ENCODE measurements at regions of chr19 and their contacts with region 1.

Region 1: DNA sequence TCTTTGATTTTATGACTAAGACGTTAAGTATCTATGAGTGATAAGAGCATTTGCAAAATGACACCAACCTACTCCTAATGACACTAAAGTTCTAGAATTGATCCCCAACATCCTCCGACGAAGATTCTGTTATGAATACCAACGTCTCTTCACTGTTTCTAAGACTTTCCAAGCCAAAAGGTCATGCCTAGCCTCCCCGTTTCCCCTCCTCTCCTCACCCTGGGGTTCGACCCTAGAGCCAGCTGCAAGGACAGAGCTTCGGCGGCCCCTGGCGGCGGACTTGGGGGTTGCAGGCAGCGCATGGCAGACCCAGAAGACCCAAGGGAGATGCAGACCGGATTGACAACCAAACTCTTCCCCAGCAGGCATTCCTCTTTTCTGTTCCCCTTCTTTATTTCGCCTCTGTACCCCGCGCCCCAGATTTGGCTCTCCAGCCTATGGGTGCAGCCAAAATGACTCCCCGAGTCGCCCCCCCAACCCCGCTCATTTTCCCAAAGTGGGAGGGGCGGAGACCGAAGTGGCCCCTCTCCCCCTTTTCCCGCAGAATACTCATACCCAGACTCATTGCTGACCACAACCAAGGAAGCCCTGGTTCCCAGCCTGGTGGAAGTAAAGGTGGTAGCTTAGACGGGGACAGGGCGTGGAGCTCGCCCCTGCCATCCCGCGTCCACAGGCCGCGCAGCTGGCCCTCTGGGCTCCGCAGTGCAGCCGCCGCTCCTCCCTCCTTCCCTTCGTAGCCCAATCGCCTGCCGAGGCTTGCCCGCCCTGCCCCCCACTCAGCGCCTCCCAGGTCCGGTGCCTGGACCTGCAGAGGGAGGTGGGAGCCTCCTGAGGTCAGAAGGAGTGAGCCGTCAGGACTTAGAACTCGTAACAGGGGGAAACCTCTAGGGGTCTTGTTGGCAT is 4.1 kb upstream of the EML2 start:
- DNase-seq: peak; percentile 71
- H3K4me3 ChIP-seq: peak overlapping the region in 2 of 3 experiments; percentile 33
- H3K27ac ChIP-seq: peak overlapping the region; percentile 1
- H3K4me1 ChIP-seq: peaks cover 38% of the 10 kb centered on the region
- H3K27me3 ChIP-seq: no peaks in the 10 kb centered on the region
- CTCF ChIP-seq: peak; percentile 98

Region 2: GRCh38 chr19:45405435-45406225 is 237.6 kb before region 1 on chr19:
- CTCF ChIA-PET with region 1: no interaction called
- dilution Hi-C with region 1: no loop called
- in situ Hi-C with region 1: no loop called
- intact Hi-C with region 1: loop called (anchors 10 kb)
- DNase-seq: peak; percentile 95
- H3K4me3 ChIP-seq: peak overlapping the region; percentile 90 to 92 (median 91)
- H3K27ac ChIP-seq: peak overlapping the region; percentile 94
- H3K4me1 ChIP-seq: peaks cover 26% of the 10 kb centered on the region
- H3K27me3 ChIP-seq: no peaks in the 10 kb centered on the region
- CTCF ChIP-seq: no peak

Region 3: DNA sequence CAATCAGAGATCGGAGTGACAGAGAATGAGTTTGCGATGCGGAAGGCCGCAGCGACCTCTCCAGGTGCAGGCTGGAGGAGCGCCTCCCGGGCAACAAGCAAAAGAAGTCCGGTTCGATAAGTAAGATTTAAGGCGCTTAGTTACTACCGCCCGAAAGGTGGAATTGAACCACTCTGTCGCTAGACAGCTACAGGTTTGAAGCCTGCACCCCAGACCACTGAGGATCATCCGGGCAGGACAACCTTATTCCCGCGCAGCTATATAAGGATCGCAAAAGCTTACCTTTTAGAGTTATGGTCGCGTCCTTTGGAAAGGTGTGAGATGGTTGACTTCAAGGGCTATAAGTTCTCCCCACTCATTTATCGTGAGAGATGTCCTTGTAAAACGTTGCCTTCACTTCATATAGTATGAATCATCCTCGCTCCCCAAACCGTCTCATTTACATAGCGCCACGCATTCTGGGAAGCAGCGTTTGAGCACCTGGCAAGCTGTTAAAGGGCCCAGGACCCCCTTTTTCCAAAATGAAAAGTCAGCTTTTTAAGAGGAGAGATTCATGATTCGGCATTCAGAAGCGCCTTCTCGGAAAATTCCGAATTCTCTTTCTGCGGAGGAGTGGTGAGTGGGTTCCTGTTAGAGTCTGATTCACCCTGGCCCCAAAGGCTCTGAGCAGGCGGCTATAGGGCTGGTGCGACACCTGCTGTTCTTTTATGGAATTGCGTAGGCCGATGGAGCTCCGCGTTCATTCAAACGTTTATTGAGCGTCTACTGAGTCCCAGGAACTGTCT is 164.6 kb before region 1 on chr19:
- CTCF ChIA-PET with region 1: no interaction called
- dilution Hi-C with region 1: no loop called
- in situ Hi-C with region 1: no loop called
- intact Hi-C with region 1: no loop called
- DNase-seq: peak; percentile 87
- H3K4me3 ChIP-seq: peak overlapping the region; percentile 47 to 58 (median 56)
- H3K27ac ChIP-seq: peak overlapping the region; percentile 99
- H3K4me1 ChIP-seq: peaks cover 5% of the 10 kb centered on the region
- H3K27me3 ChIP-seq: no peaks in the 10 kb centered on the region
- CTCF ChIP-seq: peak; percentile 96 to 98

Region 4: DNA sequence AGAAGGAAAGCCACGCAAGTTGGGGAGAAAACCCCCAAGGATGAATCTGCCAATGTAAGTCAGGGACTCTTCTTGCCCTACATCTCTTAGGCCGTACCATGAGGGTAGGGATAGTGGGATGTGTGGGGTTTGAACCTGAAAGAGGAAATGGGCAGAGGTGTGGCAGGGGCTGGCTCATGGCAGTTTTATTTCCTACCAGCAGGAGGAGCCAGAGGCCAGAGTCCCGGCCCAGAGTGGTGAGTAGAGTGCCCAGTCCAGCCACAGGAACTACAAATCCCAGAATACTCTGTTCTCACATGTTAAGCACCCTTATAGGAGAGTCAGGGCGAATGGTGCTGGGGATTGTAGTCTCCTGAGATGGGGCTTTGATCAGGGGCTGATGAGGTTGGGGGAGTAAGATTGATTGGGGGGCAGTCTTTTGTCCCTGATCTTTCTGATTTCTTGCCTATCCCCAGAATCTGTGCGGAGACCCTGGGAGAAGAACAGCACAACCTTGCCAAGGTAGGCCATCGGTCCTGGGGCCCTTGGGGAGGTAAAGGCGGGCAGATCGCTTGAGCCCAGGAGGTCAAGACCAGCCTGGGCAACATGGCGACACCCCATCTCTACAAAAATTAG is 119.5 kb before region 1 on chr19:
- CTCF ChIA-PET with region 1: no interaction called
- dilution Hi-C with region 1: no loop called
- in situ Hi-C with region 1: no loop called
- intact Hi-C with region 1: loop called (anchors 1 kb)
- DNase-seq: peak; percentile 72
- H3K4me3 ChIP-seq: no peak overlapping the region
- H3K27ac ChIP-seq: no peak overlapping the region
- H3K4me1 ChIP-seq: peaks cover 22% of the 10 kb centered on the region
- H3K27me3 ChIP-seq: no peaks in the 10 kb centered on the region
- CTCF ChIP-seq: peak; percentile 90 to 91

Region 5: GRCh38 chr19:45547976-45548609 is 95.2 kb before region 1 on chr19:
- CTCF ChIA-PET with region 1: no interaction called
- dilution Hi-C with region 1: no loop called
- in situ Hi-C with region 1: no loop called
- intact Hi-C with region 1: no loop called
- DNase-seq: peak; percentile 94
- H3K4me3 ChIP-seq: no peak overlapping the region
- H3K27ac ChIP-seq: peak overlapping the region; percentile 70
- H3K4me1 ChIP-seq: peaks cover 32% of the 10 kb centered on the region
- H3K27me3 ChIP-seq: no peaks in the 10 kb centered on the region
- CTCF ChIP-seq: no peak

Region 6: GRCh38 chr19:45591004-45591637 is 52.2 kb before region 1 on chr19:
- CTCF ChIA-PET with region 1: interaction called, 7 read pairs
- dilution Hi-C with region 1: loop called (anchors 5 kb)
- in situ Hi-C with region 1: no loop called
- intact Hi-C with region 1: loop called (anchors 1 kb)
- DNase-seq: peak; percentile 34
- H3K4me3 ChIP-seq: no peak overlapping the region
- H3K27ac ChIP-seq: no peak overlapping the region
- H3K4me1 ChIP-seq: peaks cover 5% of the 10 kb centered on the region
- H3K27me3 ChIP-seq: no peaks in the 10 kb centered on the region
- CTCF ChIP-seq: peak; percentile 51 to 71

Region 7: DNA sequence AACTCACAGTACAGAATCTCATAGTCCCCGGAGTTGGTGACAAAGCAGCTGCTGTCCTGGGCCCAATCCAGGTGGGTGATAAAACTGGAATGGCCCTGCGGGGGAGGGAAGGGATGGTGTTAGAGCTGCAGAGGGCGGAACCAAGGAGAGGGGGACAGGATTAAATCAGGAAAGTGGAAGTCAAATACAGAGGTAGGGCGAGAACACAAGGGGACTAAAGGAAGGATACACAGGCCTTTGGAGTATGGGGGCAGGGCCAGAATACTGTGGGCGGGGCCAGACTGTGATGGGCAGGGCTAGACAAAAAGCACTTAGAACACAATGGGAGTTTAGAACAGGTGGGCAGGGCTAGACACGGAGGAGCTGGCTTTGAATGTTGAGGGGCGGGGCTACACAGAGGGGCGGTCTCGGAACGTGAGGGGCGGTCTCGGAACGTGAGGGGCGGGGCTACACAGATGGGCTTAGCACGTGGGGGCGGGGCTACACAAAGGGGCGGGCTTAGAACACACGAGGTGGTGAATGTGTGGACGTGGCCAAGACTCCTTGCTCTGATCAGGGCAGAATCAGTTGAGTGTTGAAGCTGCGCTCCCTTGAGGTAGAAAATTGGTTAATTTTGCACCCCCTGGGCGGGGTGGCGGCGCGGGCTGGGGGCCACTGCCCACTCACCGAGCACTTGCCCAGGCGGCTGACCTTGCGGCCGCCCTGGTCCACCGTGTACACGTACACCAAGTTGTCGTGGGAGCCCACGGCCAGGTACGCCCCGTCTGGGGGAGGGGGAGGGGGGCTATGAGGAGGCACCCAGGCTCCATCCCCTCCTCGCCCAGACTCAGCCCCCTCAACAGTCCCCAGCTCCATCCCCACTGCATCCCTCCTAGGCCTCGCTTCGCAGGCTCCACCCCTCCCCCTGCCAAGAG is 27.2 kb before region 1 on chr19:
- CTCF ChIA-PET with region 1: no interaction called
- dilution Hi-C with region 1: no loop called
- in situ Hi-C with region 1: no loop called
- intact Hi-C with region 1: loop called (anchors 2 kb)
- DNase-seq: peak; percentile 71
- H3K4me3 ChIP-seq: no peak overlapping the region
- H3K27ac ChIP-seq: peak overlapping the region; percentile 49
- H3K4me1 ChIP-seq: peaks cover 20% of the 10 kb centered on the region
- H3K27me3 ChIP-seq: no peaks in the 10 kb centered on the region
- CTCF ChIP-seq: no peak

Region 8: DNA sequence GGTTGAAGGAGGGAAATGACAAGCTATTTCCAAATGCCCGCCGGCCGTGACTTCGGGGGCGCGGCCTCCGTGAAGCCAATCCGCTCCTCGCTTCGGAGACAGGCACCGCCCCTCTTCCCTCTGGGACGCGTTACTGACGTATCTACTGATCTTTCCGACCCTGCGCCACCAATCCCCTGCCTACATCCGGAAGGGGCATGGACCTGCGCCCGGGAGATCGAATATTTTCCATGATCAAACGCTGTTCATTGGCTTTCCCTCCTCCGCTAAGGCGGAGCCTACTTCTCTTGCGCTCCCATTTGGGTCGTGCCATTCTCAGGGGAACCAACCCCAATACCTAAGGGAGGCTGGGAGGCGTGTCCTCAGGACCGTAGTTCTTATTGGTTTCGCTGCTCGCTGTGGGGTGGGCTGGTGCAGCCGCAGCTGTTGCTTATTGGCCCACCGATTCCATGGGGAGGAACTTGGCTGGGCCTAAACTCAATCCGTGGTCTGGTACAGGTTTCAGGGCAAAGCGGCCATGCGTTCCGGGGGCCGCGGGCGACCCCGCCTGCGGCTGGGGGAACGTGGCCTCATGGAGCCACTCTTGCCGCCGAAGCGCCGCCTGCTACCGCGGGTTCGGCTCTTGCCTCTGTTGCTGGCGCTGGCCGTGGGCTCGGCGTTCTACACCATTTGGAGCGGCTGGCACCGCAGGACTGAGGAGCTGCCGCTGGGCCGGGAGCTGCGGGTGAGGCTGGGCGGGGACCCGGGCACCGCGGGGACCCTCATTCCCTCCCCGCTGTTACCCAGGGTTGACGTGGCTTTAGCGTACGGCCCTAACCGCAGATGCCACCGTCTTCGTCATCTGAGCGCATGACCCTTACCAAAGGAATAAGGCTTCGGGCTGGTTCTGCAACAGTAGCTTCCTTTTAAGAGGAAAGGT is 49.2 kb after region 1 on chr19 and contains the start of gene QPCTL:
- CTCF ChIA-PET with region 1: interaction called, 4 read pairs
- dilution Hi-C with region 1: loop called (anchors 5 kb)
- in situ Hi-C with region 1: no loop called
- intact Hi-C with region 1: no loop called
- DNase-seq: peak; percentile 100
- H3K4me3 ChIP-seq: peak within 1 kb of the TSS; percentile 72 to 91 (median 83)
- H3K27ac ChIP-seq: peak within 1 kb of the TSS; percentile 93
- H3K4me1 ChIP-seq: peaks cover 8% of the 10 kb centered on the region
- H3K27me3 ChIP-seq: no peaks in the 10 kb centered on the region
- CTCF ChIP-seq: no peak
- total RNA-seq, gene QPCTL: 22.5 to 22.6 TPM

Region 9: GRCh38 chr19:45739498-45740439 is 96.5 kb after region 1 on chr19:
- CTCF ChIA-PET with region 1: no interaction called
- dilution Hi-C with region 1: no loop called
- in situ Hi-C with region 1: no loop called
- intact Hi-C with region 1: no loop called
- DNase-seq: no peak
- H3K4me3 ChIP-seq: no peak overlapping the region
- H3K27ac ChIP-seq: no peak overlapping the region
- H3K4me1 ChIP-seq: no peaks in the 10 kb centered on the region
- H3K27me3 ChIP-seq: no peaks in the 10 kb centered on the region
- CTCF ChIP-seq: no peak

Measured in mammary epithelial cell (primary cell).